ENCODE measurements at regions of chr15 and their contacts with region 1.

Region 1: DNA sequence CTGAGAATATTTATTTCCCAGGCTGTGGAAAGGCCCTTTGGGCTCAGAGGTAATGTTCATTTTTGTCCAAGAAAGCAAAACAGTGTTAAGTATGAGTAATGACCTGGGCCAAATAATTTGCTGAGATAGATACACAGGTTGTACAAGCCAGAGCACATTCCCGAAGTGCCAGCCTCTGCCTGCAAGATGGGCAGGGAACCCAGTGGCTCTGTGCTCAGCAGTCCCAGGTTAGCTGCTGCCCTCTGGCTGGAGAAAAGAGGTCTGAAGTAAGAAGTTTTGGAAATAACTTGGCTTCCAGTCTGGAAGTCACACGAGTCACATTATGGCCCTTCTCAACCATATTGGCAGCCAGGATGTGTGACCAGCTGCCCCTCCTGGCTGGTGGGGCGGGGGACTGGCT is 20.2 kb downstream of the MYZAP start:
- DNase-seq: peak; percentile 63
- ATAC-seq: peak; percentile 67

Region 2: DNA sequence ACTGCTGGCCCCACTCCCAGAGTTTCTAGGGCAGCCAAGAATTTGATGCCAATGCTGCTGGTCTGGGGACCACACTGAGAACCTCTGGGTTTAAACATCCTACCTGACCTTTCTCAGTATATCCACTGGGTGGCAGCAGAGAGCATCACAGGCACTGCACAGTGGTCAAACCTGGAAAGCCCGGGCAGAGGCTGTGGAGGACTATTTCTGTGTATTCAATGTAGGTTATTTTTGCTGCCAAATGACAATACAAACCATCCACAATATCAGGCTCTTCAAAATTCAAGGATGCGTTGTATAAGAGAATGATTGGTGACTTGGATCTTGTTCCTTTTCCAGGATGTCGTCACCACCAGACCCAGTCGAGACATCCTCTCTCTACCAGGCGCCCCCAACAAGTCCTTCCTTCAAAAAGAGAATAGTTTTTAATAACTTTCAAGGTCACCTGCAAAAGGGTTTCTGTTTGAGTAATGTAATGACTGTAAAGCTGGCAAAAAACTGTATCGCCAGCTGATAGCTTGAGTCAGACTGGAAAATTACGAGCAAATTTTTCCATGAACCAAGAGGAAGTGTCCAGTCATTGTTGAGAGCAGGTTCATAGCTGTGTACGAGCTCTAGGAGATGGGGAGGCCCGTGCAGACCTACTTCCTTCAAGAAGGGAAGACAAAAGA is 50.8 kb before region 1 on chr15:
- intact Hi-C with region 1: loop called (anchors 10 kb)
- DNase-seq: peak; percentile 67
- ATAC-seq: peak; percentile 90

Measured in left ventricle myocardium superior (tissue), 1 donor.